Activated CD4-positive, alpha-beta memory T cell treated with anti-CD3 and anti-CD28 coated beads for 36 hours (primary cell): ENCODE measurements at regions of chr3 and their contacts with region 1.

Region 1: GRCh38 chr3:194671900-194672808 is at the start of gene LSG1:
- DNase-seq: peak; percentile 93
- H3K4me3 Mint-ChIP-seq: peak within 1 kb of the TSS; percentile 98
- H3K27ac Mint-ChIP-seq: peak within 1 kb of the TSS; percentile 94
- H3K4me1 Mint-ChIP-seq: peaks cover 59% of the 10 kb centered on the region
- H3K27me3 Mint-ChIP-seq: peaks cover 2% of the 10 kb centered on the region
- total RNA-seq, gene LSG1: 34.6 to 35.3 TPM

Region 2: GRCh38 chr3:194592798-194593752 is 79.1 kb before region 1 on chr3:
- CTCF ChIA-PET with region 1: no interaction called
- POLR2A ChIA-PET with region 1: no interaction called
- intact Hi-C with region 1: no loop called
- DNase-seq: no peak
- H3K4me3 Mint-ChIP-seq: no peak overlapping the region
- H3K27ac Mint-ChIP-seq: no peak overlapping the region
- H3K4me1 Mint-ChIP-seq: peaks cover 4% of the 10 kb centered on the region
- H3K27me3 Mint-ChIP-seq: no peaks in the 10 kb centered on the region

Region 3: DNA sequence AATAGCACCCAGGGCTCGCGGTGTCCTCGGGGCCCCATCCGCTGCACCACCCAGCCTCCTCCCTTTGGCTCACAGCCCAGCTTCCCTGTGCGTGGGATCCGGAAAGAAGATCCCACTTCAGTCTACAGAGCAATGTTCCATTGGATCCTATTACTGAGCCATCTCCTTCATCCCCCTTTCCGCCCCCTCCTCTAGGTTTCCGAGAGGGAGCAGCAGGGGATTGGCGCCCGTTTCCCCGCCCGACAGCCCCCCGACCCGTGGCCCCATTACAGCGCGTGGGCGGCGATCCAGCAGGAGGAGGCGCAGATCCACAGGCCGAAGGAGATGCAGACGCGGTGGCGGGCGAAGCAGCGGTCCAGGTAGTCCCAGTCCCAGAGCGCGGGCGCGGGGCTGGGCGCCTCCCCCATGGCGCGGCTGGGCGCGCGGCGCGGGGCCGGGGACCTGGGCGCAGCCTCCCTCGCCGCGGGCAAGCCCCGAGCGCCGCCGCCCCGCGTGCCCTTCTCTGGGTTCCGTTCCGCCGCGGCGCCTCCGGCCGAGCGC is 39.3 kb before region 1 on chr3:
- CTCF ChIA-PET with region 1: interaction called, 15 read pairs
- POLR2A ChIA-PET with region 1: no interaction called
- intact Hi-C with region 1: loop called (anchors 2 kb)
- DNase-seq: peak; percentile 20
- H3K4me3 Mint-ChIP-seq: peak overlapping the region; percentile 82
- H3K27ac Mint-ChIP-seq: no peak overlapping the region
- H3K4me1 Mint-ChIP-seq: peaks cover 5% of the 10 kb centered on the region
- H3K27me3 Mint-ChIP-seq: no peaks in the 10 kb centered on the region

Region 4: DNA sequence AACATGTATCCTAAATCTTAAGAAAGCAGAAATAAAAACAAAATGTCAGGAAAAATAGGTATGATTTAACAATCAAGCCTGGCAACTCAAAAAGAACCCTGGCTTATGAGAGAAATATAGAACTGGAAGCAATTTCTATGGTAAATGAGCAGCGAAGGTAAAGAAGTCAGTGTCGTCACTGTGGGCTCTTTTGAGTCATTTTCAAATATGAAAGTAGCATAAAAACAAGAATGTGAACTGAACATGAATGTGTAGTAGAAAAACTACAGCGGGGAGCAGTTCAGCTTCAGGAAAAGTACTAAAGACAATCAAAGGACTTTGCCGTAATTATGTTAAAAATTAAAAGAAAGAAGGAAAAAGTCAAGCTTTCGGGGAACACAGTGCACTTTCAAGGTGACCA is 17.7 kb before region 1 on chr3:
- CTCF ChIA-PET with region 1: interaction called, 49 read pairs
- POLR2A ChIA-PET with region 1: interaction called, 3 read pairs
- intact Hi-C with region 1: loop called (anchors 1 kb)
- DNase-seq: no peak
- H3K4me3 Mint-ChIP-seq: peak overlapping the region; percentile 11
- H3K27ac Mint-ChIP-seq: peak overlapping the region; percentile 83
- H3K4me1 Mint-ChIP-seq: peaks cover 21% of the 10 kb centered on the region
- H3K27me3 Mint-ChIP-seq: no peaks in the 10 kb centered on the region

Region 5: DNA sequence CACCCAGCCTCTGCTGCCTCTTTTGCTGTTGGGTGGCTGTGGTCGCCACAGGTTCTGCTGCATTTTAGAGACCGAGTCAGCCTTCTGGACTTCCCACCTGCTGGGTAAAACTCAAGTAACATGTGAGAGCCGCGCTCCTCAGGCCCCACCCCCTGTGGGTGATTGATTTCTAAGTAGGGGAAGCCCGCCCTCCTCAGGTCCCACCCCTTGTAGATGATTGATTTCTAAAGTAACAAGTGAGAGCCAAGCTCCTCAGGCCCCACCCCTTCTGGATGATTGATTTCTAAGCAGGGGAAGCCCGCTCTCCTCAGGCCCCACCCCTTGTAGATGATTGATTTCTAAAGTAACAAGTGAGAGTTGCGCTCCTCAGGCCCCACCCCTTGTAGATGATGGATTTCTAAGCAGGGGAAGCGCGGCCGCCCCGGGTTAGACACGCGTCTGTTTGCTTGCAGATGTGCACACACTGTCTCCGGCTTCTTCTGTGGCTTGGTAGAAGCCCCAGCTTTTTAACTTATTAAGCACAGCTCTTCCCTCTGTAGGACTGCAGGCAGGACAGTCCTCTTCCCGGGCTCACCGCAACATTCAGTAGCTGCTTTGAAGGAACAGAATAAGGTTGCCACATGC is 97.0 kb after region 1 on chr3:
- CTCF ChIA-PET with region 1: interaction called, 4 read pairs
- POLR2A ChIA-PET with region 1: no interaction called
- intact Hi-C with region 1: loop called (anchors 1 kb)
- DNase-seq: peak; percentile 96
- H3K4me3 Mint-ChIP-seq: peak overlapping the region; percentile 68
- H3K27ac Mint-ChIP-seq: peak overlapping the region; percentile 70
- H3K4me1 Mint-ChIP-seq: peaks cover 19% of the 10 kb centered on the region
- H3K27me3 Mint-ChIP-seq: peaks cover 5% of the 10 kb centered on the region

Region 6: GRCh38 chr3:195259475-195260279 is 587.5 kb after region 1 on chr3:
- CTCF ChIA-PET with region 1: interaction called, 22 read pairs
- POLR2A ChIA-PET with region 1: no interaction called
- intact Hi-C with region 1: loop called (anchors 1 kb)
- DNase-seq: peak; percentile 90
- H3K4me3 Mint-ChIP-seq: peak overlapping the region; percentile 57
- H3K27ac Mint-ChIP-seq: peak overlapping the region; percentile 42
- H3K4me1 Mint-ChIP-seq: peaks cover 14% of the 10 kb centered on the region
- H3K27me3 Mint-ChIP-seq: no peaks in the 10 kb centered on the region